Gastrocnemius medialis (tissue), 4 donors: ENCODE measurements at regions of chr18 and their contacts with region 1.

Region 1: GRCh38 chr18:63969960-63970802 is at the start of gene SERPINB8:
- DNase-seq: peak; percentile 83 to 88
- ATAC-seq: peak; percentile 96 to 98
- H3K4me3 ChIP-seq: peak within 1 kb of the TSS; percentile 57 to 95 (median 80)
- H3K27ac ChIP-seq: peak within 1 kb of the TSS; percentile 82 to 92 (median 87)
- H3K4me1 ChIP-seq: peaks cover 7 to 8% of the 10 kb centered on the region in 2 donors
- H3K27me3 ChIP-seq: no peaks in the 10 kb centered on the region
- CTCF ChIP-seq: no peak
- POLR2A ChIP-seq: peak; percentile 77 to 78
- total RNA-seq, gene SERPINB8: 0.87 to 3.8 (median 1.6) TPM

Region 2: GRCh38 chr18:63422087-63422809 is 547.9 kb before region 1 on chr18 and contains the start of gene VPS4B:
- in situ Hi-C with region 1: no loop called
- intact Hi-C with region 1: loop called (anchors 5 kb)
- DNase-seq: peak; percentile 98 to 99
- ATAC-seq: peak; percentile 99
- H3K4me3 ChIP-seq: peak within 1 kb of the TSS; percentile 93 to 96 (median 94)
- H3K27ac ChIP-seq: peak within 1 kb of the TSS; percentile 88 to 97 (median 93)
- H3K4me1 ChIP-seq: peaks cover 14 to 16% of the 10 kb centered on the region in 2 donors
- H3K27me3 ChIP-seq: no peaks in the 10 kb centered on the region
- CTCF ChIP-seq: peak in 1 of 5 experiments; percentile 20
- POLR2A ChIP-seq: peak; percentile 81 to 84
- total RNA-seq, gene VPS4B: 13.4 to 18.2 (median 16.0) TPM